Heart left ventricle (tissue), 16 donors: ENCODE measurements at regions of chr3 and their contacts with region 1.

Region 1: GRCh38 chr3:49906004-49906743 is 2.5 kb upstream of the MST1R start:
- DNase-seq: peak in 3 of 5 donors; percentile 46 to 57 (median 54)
- ATAC-seq: peak in 3 of 4 donors; percentile 47 to 72 (median 60)
- H3K4me3 ChIP-seq: peak overlapping the region in 10 of 12 donors; percentile 13 to 45 (median 32)
- H3K27ac ChIP-seq: peak overlapping the region in 11 of 12 donors; percentile 11 to 72 (median 54)
- H3K4me1 ChIP-seq: peaks cover 4 to 36% (median 23%) of the 10 kb centered on the region in 12 donors
- H3K27me3 ChIP-seq: no peaks in the 10 kb centered on the region
- CTCF ChIP-seq: peak; percentile 40 to 87 (median 72)
- POLR2A ChIP-seq: no peak

Region 2: DNA sequence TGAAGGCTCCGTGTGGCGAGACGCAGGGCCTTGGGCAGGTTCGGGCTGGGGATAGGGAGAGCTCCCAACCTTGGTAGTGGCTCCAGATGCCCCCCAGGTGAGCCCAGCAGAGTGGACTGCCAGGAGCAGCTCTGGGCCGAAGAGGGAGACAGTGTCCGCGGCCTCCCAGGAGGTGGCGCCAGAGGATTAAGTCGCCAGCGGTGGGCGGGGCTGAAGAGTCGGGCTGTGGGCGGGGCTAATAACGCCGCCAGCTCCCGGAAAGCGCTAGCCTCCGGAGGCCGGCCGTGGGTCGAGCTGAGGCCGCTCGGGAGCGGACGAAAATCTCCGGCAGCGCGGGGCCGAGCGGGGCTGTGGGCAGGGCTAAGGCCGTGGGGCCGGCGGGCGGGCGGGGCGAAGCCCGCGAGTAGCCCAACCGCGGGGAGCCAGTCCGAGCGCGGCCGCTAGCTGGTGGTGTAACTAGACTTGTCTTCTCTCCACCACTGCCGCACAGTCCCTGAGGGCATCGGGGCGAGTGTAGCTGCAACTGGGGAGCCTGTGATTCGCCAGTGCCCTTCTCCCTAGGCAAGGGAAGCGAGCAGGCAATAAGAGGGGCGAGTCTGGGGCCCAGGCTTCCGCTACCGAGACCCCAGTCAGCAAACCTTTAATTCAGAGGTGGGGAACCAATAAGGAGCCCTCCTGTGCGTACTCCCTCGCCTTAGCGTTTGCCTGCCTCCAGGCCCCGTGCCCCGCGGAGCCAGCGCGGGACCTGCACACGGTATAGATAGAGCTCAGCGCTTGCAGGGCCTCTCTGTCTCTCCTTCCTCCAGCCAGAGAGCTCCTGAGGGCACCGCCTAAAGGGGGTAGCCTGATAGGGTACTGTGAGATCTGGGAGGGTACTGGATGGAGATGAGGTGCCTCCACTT is 366.3 kb before region 1 on chr3:
- intact Hi-C with region 1: loop called in 1 of 10 experiments (anchors 10 kb)
- DNase-seq: peak; percentile 93 to 98 (median 95)
- ATAC-seq: peak; percentile 92 to 98 (median 98)
- H3K4me3 ChIP-seq: peak overlapping the region; percentile 12 to 89 (median 57)
- H3K27ac ChIP-seq: peak overlapping the region; percentile 12 to 88 (median 76)
- H3K4me1 ChIP-seq: peaks cover 0 to 25% (median 7%) of the 10 kb centered on the region in 12 donors
- H3K27me3 ChIP-seq: no peaks in the 10 kb centered on the region
- CTCF ChIP-seq: peak; percentile 87 to 99 (median 91)
- POLR2A ChIP-seq: peak in 1 of 2 donors; percentile 65

Region 3: DNA sequence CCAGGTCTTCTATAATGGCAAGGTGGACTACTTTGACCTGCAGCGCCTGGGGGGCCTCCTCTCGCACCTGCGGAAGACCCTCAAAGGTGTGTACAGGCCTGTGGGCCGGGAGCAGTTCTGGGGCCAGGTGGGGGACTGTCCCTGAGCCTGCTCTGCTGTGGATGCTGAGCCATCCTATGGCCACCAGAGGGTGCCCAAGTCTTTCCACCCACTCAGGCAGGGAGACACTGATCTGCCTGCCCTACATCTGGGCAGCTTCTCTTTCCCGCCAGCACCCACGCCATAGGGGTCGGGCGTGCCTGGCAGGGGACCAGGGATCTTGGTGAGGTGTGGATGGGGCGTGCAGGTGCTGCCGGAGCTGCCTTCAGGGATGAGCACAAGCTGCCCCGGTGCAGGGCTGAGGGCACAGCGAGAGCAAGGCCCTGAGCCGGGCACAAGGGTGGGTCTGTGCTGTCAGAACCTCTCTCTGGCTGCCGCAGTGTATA is 202.7 kb before region 1 on chr3:
- intact Hi-C with region 1: loop called in 6 of 10 experiments (anchors 2 to 10 kb)
- DNase-seq: peak in 3 of 5 donors; percentile 56 to 64 (median 56)
- ATAC-seq: peak; percentile 34 to 78 (median 64)
- H3K4me3 ChIP-seq: no peak overlapping the region
- H3K27ac ChIP-seq: no peak overlapping the region
- H3K4me1 ChIP-seq: peaks cover 0 to 21% (median 4%) of the 10 kb centered on the region in 12 donors
- H3K27me3 ChIP-seq: no peaks in the 10 kb centered on the region
- CTCF ChIP-seq: peak; percentile 59 to 80 (median 74)
- POLR2A ChIP-seq: no peak

Region 4: GRCh38 chr3:49723628-49724551 is 182.3 kb before region 1 on chr3 and contains the start of gene GMPPB:
- intact Hi-C with region 1: loop called in 2 of 10 experiments (anchors 5 to 10 kb)
- DNase-seq: peak; percentile 98 to 99 (median 99)
- ATAC-seq: peak; percentile 81 to 90 (median 88)
- H3K4me3 ChIP-seq: peak within 1 kb of the TSS; percentile 73 to 100 (median 96)
- H3K27ac ChIP-seq: peak within 1 kb of the TSS; percentile 60 to 98 (median 92)
- H3K4me1 ChIP-seq: peaks cover 11 to 37% (median 24%) of the 10 kb centered on the region in 12 donors
- H3K27me3 ChIP-seq: no peaks in the 10 kb centered on the region
- CTCF ChIP-seq: peak in 1 of 12 donors; percentile 2
- POLR2A ChIP-seq: peak in 1 of 2 donors; percentile 78
- total RNA-seq, gene GMPPB: 9.4 to 21.8 (median 13.7) TPM

Region 5: GRCh38 chr3:49802719-49803464 is 103.3 kb before region 1 on chr3 and contains the start of gene INKA1:
- intact Hi-C with region 1: loop called (anchors 1 to 5 kb)
- DNase-seq: peak; percentile 92 to 95 (median 93)
- ATAC-seq: peak; percentile 77 to 84 (median 82)
- H3K4me3 ChIP-seq: peak within 1 kb of the TSS; percentile 69 to 98 (median 84)
- H3K27ac ChIP-seq: peak within 1 kb of the TSS; percentile 86 to 99 (median 98)
- H3K4me1 ChIP-seq: peaks cover 23 to 58% (median 47%) of the 10 kb centered on the region in 12 donors
- H3K27me3 ChIP-seq: no peaks in the 10 kb centered on the region
- CTCF ChIP-seq: peak in 11 of 12 donors; percentile 88 to 97 (median 92)
- POLR2A ChIP-seq: peak in 1 of 2 donors; percentile 78
- total RNA-seq, gene INKA1: 1.1 to 5.0 (median 3.3) TPM

Region 6: DNA sequence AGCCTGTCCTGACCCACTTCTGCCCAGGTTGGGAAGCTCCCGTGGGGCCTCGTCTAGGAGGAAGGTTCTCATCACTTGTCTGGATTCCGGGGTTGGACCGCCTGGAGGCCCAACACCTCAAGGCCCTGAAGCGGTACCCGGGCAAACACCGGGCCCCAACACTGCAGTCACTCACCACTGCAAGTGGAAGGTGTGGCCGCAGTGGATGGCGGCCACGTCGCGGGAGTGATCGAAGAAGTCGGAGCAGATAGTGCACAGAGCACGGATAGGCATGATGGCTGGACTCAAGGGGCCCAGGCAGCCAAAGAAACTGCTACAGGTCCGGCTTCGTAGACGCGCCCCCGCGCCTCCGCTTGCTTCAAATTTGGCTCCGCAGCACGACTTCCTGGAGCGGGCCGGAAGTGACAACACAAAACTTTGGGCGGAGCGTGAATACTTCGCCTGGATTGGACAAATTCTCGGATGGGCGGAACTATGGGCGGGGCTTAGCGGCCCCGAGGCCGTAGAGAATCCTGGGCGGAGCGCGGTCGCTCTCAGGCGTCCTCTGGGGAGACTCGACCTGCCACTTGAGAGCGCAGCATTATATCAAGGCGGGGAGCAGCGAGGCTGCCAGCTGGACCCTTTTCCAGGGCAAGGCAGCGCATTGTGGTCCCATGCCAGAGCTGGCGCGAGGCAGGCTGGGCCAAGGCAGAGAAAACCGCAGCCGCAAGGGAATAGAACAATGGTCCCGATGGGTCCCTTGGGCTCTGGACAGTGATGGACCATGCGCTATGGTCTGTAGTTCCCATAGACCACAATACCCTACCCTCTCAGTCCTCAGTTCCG is 49.8 kb before region 1 on chr3 and contains the start of gene TRAIP:
- intact Hi-C with region 1: loop called in 1 of 10 experiments (anchors 5 kb)
- DNase-seq: peak; percentile 94 to 96 (median 95)
- ATAC-seq: peak; percentile 99 to 100 (median 100)
- H3K4me3 ChIP-seq: peak within 1 kb of the TSS; percentile 28 to 91 (median 61)
- H3K27ac ChIP-seq: peak within 1 kb of the TSS; percentile 34 to 88 (median 82)
- H3K4me1 ChIP-seq: peaks cover 0 to 14% (median 8%) of the 10 kb centered on the region in 12 donors
- H3K27me3 ChIP-seq: no peaks in the 10 kb centered on the region
- CTCF ChIP-seq: peak in 2 of 12 donors; percentile 15 to 24
- POLR2A ChIP-seq: peak in 1 of 2 donors; percentile 65
- total RNA-seq, gene TRAIP: 0.37 to 6.3 (median 0.99) TPM in 8 of 9 donors, not detected in the other

Region 7: DNA sequence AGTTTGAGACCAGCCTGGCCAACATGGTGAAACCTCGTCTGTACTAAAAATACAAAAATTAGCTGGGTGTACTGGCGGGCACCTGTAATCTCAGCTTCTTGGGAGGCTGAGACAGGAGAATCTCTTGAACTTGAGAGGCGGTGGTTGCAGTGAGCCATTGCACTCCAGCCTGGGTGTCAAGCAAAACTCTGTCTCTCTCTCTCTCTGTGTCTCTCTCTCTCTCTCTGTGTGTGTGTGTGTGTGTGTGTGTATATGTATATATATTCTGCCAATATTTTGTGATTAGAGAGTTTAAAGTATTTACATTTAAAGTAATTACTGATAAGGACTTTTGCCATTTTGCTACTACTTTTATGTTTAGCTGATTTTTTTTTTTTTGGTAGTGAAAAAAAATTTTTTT is 49.5 kb after region 1 on chr3:
- intact Hi-C with region 1: no loop called
- DNase-seq: no peak
- ATAC-seq: no peak
- H3K4me3 ChIP-seq: no peak overlapping the region
- H3K27ac ChIP-seq: no peak overlapping the region
- H3K4me1 ChIP-seq: peaks cover 0 to 14% (median 10%) of the 10 kb centered on the region in 12 donors
- H3K27me3 ChIP-seq: no peaks in the 10 kb centered on the region
- CTCF ChIP-seq: no peak
- POLR2A ChIP-seq: no peak